PC-9 (cell line): ENCODE measurements at regions of chr1 and their contacts with region 1.

Region 1: GRCh38 chr1:58922302-58923089 is 138.6 kb upstream of the JUN start:
- DNase-seq: peak in 1 of 2 experiments; percentile 28
- H3K4me3 ChIP-seq: no peak overlapping the region
- H3K27ac ChIP-seq: no peak overlapping the region
- H3K4me1 ChIP-seq: peaks cover 9% of the 10 kb centered on the region
- H3K27me3 ChIP-seq: no peaks in the 10 kb centered on the region
- CTCF ChIP-seq: no peak

Region 2: DNA sequence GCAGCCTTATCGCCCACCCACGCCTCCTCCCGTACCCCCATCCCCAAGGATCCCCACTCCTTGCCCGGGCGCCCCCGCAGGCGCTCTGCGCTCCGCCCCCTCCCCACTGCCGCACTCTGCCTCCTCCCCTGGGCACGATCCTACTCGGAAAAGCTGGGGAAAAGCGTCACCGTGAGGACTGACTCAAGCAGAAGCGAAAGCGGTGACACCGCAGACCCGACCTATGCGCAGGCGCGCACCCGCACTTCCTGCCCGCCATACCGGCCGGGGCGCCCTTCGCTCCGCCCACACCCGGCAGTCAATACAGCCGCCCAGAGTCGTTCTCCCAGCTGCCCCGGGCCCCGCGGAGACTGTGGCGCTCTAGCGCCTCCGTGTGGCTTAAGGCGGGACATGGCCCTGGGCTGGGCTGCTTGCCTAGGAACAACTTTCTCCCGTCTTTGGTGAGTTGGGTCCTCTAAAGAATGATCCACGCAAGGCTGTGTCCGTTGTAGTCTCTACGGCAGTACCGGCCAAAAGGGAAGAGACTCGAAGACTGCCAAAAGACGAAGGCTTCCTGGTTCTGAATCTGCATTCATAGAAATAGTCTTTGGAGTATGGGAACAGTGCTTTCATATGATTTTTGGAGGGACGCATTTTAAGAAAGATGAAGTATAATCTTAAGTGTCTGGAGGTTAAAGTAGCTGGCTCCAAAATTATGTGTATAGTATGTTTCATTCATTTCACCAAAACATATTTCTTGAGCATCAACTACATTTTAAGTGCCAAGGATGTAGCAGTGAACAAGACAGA is 375.8 kb before region 1 on chr1 and contains the start of gene OMA1:
- CTCF ChIA-PET with region 1: interaction called, 16 read pairs
- POLR2A ChIA-PET with region 1: no interaction called
- intact Hi-C with region 1: no loop called
- DNase-seq: peak; percentile 85 to 98
- H3K4me3 ChIP-seq: peak within 1 kb of the TSS; percentile 85
- H3K27ac ChIP-seq: peak within 1 kb of the TSS; percentile 79
- H3K4me1 ChIP-seq: peaks cover 11% of the 10 kb centered on the region
- H3K27me3 ChIP-seq: no peaks in the 10 kb centered on the region
- CTCF ChIP-seq: peak; percentile 90
- total RNA-seq, gene OMA1: 27.9 and 29.0 TPM in 2 replicates

Region 3: DNA sequence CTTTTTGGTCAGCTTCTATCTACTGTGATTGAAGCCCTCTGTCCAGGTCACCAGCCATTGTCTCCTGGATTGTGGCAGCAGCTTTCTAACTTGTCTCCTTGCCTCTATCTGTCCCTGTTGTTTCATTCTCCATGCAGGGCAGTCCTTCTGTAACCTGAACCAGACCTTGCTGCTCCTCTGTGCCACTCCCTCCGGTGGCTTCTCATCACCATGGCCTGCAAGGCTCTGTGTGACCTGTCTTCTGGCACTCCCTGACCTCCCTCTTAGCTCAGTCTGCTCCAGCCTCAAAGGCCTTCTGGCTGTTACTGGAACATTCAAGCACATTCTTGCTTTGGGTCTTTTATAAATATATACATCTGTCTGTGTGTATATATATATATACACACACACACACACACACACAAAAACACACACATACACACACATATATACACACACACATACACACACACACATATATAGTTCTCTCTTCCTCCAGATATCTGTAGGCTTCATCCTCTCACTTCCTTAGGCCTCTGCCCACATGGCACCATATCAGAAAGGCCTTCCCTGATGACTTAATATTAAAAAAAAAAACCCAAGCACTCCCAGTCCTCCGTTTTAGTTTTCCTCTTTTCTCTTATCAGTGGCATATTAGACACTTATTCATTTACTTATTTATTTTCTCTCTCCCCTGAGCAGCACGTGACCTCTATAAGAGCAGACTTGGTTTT is 117.5 kb before region 1 on chr1:
- CTCF ChIA-PET with region 1: no interaction called
- POLR2A ChIA-PET with region 1: interaction called, 16 read pairs
- intact Hi-C with region 1: no loop called
- DNase-seq: peak; percentile 62 to 65
- H3K4me3 ChIP-seq: no peak overlapping the region
- H3K27ac ChIP-seq: peak overlapping the region; percentile 45
- H3K4me1 ChIP-seq: peaks cover 29% of the 10 kb centered on the region
- H3K27me3 ChIP-seq: no peaks in the 10 kb centered on the region
- CTCF ChIP-seq: 0 out of 2 replicates have a peak, but pooled peaks have one; percentile 16